ENCODE measurements at regions of chr12 and their contacts with region 1.

Region 1: GRCh38 chr12:90978117-90978770 is 23.3 kb upstream of the CCER1 start:
- DNase-seq: no peak
- H3K4me3 ChIP-seq: no peak overlapping the region
- CTCF ChIP-seq: peak; percentile 51

Region 2: GRCh38 chr12:91140026-91140931 is 162.0 kb after region 1 on chr12:
- CTCF ChIA-PET with region 1: interaction called, 16 read pairs
- POLR2A ChIA-PET with region 1: no interaction called
- DNase-seq: peak; percentile 75
- H3K4me3 ChIP-seq: no peak overlapping the region
- CTCF ChIP-seq: no peak

Region 3: DNA sequence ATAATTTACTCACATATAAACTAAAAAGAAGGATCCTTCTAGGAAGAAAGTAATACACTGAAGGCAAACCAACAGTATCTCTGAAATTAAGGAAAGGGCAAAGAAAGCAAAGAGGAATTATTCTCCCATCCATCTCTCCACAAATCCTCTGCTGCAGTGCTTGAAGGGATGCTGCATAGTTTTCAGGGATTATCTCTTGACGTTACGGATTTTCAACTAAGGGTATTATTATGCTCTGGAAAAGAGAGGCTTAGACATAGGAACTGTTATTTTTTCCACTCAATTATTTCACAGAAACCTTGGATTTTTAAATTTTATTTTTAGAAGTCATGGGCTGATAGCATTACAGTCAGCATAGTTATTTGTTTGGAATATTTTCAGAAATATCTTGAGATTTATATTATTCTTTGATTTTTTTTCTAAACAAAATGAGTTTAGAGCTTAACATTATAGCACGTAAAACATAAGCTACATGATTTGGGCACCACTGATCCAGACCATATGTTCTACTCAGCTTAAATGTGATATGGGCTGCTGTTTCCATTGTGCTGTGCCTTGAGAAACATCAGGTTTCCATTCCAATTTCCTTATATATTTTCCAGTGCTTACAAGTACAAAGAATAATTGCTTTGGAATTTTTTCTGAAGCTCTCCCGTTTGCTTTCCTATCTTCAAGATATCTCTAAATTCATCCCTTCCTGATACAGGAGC is 262.3 kb after region 1 on chr12:
- CTCF ChIA-PET with region 1: interaction called, 24 read pairs
- POLR2A ChIA-PET with region 1: no interaction called
- DNase-seq: no peak
- H3K4me3 ChIP-seq: no peak overlapping the region
- CTCF ChIP-seq: no peak

Region 4: DNA sequence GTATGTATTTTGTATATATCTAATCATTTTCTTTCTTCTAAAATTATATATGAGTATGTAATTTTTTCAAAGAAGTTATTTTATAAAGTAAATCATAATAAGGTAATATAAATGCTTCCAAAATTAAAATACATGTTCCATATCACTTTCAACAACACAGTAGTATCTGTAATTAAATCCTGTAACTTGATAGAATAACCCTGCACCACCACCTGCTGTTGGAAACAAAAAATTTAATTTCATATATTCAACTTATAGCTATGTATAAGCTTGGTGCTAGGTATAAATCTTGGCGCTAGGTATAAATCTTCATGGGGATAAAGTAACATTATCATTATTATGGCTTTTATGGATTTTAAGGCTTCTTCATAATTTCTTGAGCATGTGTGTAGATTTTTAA is 354.1 kb after region 1 on chr12:
- CTCF ChIA-PET with region 1: interaction called, 84 read pairs
- POLR2A ChIA-PET with region 1: no interaction called
- DNase-seq: no peak
- H3K4me3 ChIP-seq: no peak overlapping the region
- CTCF ChIP-seq: no peak

Region 5: DNA sequence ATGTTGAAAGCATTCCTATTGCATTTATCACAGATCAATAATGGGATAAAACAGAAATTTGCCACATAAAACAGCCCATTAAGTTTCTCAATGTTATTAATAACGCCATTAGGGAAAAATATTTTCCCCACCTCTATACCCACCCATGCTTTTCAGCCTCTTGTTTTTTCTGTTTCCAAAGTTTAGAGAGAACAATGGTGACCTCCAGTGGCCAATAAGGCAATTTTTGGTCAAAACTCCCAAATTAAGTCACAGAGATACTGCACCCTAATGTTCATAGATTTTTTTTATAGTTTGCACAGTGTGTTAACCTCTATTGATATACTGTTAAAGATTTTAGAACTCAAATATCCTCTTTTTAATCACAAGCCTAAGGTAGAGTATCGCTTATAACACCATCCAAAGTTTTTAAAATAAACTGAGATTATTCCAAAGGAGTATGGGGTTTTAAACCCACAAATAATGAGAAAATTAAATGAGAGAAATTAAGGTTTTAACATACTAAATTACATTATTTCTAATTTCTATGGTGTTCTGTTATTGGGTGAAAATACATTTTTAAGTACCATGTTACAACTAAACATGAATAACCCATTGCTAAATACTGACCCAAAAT is 389.1 kb after region 1 on chr12:
- CTCF ChIA-PET with region 1: interaction called, 15 read pairs
- POLR2A ChIA-PET with region 1: no interaction called
- DNase-seq: no peak
- H3K4me3 ChIP-seq: no peak overlapping the region
- CTCF ChIP-seq: peak; percentile 31

Region 6: DNA sequence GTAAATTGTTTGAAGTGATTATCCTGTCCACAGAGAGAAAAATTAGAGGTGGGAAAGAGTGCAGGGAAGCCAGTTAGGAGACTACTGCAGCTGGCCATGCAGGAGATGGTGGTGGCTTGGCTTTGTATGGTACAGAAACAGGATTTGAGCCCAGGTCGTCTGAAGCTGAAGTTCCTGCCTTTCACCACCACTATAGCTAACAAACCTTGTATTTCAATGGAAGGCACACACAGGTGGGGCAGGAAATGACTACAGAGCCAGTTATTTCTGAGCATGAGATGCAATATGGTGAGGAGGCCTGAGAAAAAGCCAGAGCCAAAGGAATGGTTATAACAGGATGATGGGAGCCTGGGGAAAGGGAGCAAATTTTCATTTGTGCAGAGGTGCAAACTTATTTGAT is 1063.5 kb after region 1 on chr12:
- CTCF ChIA-PET with region 1: no interaction called
- POLR2A ChIA-PET with region 1: no interaction called
- DNase-seq: no peak
- H3K4me3 ChIP-seq: no peak overlapping the region
- CTCF ChIP-seq: no peak